Activated naive CD4-positive, alpha-beta T cell treated with anti-CD3 and anti-CD28 coated beads, Interleukin-2, amount 10 ng/mL, durations not matched to agents 7 days and 5 days (primary cell): ENCODE measurements at regions of chr15 and their contacts with region 1.

Region 1: GRCh38 chr15:72227192-72227586 is 3.8 kb downstream of the PKM start:
- DNase-seq: peak; percentile 39
- H3K4me3 Mint-ChIP-seq: peak overlapping the region; percentile 96
- H3K27ac Mint-ChIP-seq: peak overlapping the region; percentile 93
- H3K4me1 Mint-ChIP-seq: peaks cover 63% of the 10 kb centered on the region
- H3K27me3 Mint-ChIP-seq: no peaks in the 10 kb centered on the region

Region 2: GRCh38 chr15:72206677-72207000 is 20.6 kb before region 1 on chr15:
- CTCF ChIA-PET with region 1: interaction called, 11 read pairs
- DNase-seq: no peak
- H3K4me3 Mint-ChIP-seq: no peak overlapping the region
- H3K27ac Mint-ChIP-seq: no peak overlapping the region
- H3K4me1 Mint-ChIP-seq: peaks cover 4% of the 10 kb centered on the region
- H3K27me3 Mint-ChIP-seq: no peaks in the 10 kb centered on the region

Region 3: DNA sequence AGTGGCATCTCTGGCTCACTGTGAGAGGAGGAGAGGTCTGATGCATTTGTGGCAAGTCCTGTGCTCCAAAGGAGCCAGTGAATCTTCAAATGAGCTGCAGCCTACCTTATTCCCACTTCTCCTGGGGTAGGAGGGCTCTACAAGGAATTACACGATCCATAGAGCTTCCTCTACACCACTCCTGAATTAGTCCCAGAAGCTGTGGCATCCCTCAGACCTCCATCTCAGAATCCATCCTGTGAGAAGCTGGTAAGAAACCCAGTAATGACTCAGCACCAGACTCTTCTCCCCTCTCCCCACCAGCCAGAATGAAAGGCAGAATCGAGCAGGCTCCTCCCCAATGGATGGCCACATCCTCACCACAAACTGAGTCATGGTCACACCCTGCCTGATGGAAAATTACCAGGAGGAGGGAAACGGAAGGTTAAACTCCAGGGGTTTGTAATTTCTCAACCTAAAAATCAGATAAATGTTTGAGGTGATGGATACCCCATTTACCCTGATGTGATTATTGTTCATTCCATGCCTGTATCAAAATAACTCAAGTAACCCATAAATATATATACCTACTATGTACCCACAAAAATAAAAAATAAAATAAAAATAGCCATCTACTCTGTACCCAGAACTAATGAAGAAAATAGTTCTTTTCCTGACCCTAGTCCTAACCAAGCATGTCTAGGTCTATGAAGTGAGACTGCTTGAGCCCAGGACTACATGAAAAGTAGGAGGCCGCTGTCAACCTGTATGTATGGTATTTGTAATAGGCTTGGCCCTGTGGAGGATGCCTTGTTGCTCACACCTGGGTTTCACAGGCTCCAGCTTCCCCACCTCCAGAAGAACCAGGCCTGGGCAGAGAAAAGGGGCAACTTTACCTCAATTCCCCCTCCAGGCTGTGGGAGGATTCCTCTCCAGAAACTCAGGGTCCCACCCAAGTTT is 10.4 kb after region 1 on chr15:
- CTCF ChIA-PET with region 1: interaction called, 13 read pairs
- DNase-seq: peak; percentile 74
- H3K4me3 Mint-ChIP-seq: peak overlapping the region; percentile 47
- H3K27ac Mint-ChIP-seq: peak overlapping the region; percentile 78
- H3K4me1 Mint-ChIP-seq: peaks cover 33% of the 10 kb centered on the region
- H3K27me3 Mint-ChIP-seq: no peaks in the 10 kb centered on the region

Region 4: GRCh38 chr15:72272213-72273002 is 45.2 kb after region 1 on chr15 and contains the start of gene PARP6:
- CTCF ChIA-PET with region 1: interaction called, 16 read pairs
- DNase-seq: peak; percentile 99
- H3K4me3 Mint-ChIP-seq: peak within 1 kb of the TSS; percentile 88
- H3K27ac Mint-ChIP-seq: peak within 1 kb of the TSS; percentile 86
- H3K4me1 Mint-ChIP-seq: peaks cover 41% of the 10 kb centered on the region
- H3K27me3 Mint-ChIP-seq: no peaks in the 10 kb centered on the region